ENCODE measurements at regions of chr2 and their contacts with region 1.

Region 1: GRCh38 chr2:18771212-18771611 is 181.8 kb upstream of the NT5C1B start:
- DNase-seq: peak in 1 of 2 experiments; percentile 62
- H3K4me3 ChIP-seq: no peak overlapping the region
- H3K27ac ChIP-seq: no peak overlapping the region
- H3K4me1 ChIP-seq: peaks cover 8% of the 10 kb centered on the region; the same call in 1 of the 2 replicates
- H3K27me3 ChIP-seq: no peaks in the 10 kb centered on the region
- CTCF ChIP-seq: no peak

Region 2: DNA sequence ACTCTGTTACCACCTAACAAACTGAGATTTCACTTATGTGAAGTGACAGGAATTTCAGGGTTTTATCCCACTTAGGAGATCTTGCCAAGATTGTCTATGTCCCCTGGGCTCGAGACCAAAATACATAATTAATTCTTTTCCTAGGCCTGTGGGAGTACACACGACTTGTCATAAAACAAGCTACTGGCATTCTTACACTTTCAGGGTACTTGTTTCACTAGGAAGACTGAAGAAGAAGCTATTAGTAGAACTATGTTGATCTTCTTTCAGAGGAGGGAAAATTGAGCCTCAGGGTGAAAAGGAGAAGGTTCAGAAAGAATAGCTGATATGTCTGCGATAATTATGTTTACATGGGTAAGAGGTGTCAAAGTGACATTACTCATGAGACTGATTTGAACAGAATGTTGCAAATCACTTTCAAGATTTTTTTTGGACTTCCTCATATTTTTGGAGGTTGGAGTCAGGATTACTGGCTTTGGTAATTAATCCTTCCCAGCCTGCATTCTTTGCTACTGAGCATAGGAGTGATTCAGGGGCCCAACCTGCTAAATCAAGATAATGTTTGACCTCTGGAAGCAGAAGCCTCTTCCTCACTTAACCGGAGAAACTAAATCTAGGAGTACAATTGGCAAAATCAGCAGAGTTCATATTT is 58.2 kb after region 1 on chr2:
- CTCF ChIA-PET with region 1: no interaction called
- POLR2A ChIA-PET with region 1: no interaction called
- intact Hi-C with region 1: loop called (anchors 1 kb)
- DNase-seq: peak; percentile 55 to 99
- H3K4me3 ChIP-seq: peak overlapping the region; percentile 15; the same call in 1 of the 2 replicates
- H3K27ac ChIP-seq: peak overlapping the region; percentile 82
- H3K4me1 ChIP-seq: peaks cover 86% of the 10 kb centered on the region
- H3K27me3 ChIP-seq: no peaks in the 10 kb centered on the region
- CTCF ChIP-seq: no peak

Measured in PC-9 (cell line).